ENCODE measurements at regions of chr20 and their contacts with region 1.

Region 1: DNA sequence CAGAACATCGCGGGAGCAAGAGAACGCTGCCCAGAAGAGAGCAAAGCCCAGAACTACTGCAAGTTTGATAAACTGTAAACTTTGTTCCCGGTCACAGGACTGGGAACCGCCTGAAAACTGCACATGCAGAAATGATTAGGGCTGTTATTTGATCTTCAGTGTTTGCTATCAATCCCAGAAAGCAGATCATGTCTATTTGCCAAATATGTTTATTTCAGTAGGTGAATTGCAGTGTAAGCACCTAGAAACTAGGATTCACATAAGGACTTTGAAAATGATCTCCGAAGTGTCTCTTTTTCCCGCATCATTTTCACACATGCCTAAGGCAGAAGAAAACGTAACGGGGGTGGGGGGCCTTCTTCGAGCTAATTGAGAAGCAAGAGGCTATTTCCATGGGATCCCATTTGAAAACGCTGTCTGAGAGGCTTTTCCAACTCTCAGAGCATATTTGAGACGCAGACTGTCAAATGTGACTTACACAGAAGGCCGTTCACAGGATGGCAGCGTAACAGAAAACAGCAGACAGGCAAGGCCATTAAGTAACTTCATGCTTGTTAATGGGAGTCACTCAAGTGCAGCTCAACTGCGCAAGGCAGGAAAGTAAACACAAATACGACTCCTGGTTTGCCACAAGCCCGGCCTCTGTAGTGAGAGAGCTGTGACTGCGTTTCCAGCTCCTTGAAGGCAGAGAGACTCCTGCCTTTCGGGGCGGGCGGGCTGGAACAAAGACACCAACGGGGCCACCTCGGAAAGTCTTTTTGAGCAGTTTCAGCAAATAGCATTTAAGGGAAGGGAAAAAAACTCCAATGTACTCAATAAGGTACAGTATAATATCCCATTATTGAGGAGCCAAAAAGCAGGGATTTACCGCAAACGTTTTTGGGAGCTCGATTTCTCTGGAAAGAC is 144.7 kb upstream of the ZNF217 start:
- DNase-seq: peak; percentile 90
- ATAC-seq: peak; percentile 82
- H3K4me3 ChIP-seq: peak overlapping the region; percentile 22; the same call in 1 of the 2 replicates
- H3K27ac ChIP-seq: peak overlapping the region; percentile 75
- H3K4me1 ChIP-seq: peaks cover 28% of the 10 kb centered on the region
- H3K27me3 ChIP-seq: no peaks in the 10 kb centered on the region
- CTCF ChIP-seq: no peak
- POLR2A ChIP-seq: peak; percentile 75
- RAD21 ChIP-seq: no peak

Region 2: GRCh38 chr20:53611449-53611894 is 126.8 kb before region 1 on chr20:
- CTCF ChIA-PET with region 1: interaction called, 5 read pairs
- POLR2A ChIA-PET with region 1: no interaction called
- dilution Hi-C with region 1: no loop called
- in situ Hi-C with region 1: no loop called
- intact Hi-C with region 1: loop called (anchors 5 kb)
- DNase-seq: peak; percentile 99
- ATAC-seq: peak; percentile 90
- H3K4me3 ChIP-seq: peak overlapping the region; percentile 4; the same call in 1 of the 2 replicates
- H3K27ac ChIP-seq: peak overlapping the region; percentile 81
- H3K4me1 ChIP-seq: peaks cover 18% of the 10 kb centered on the region
- H3K27me3 ChIP-seq: no peaks in the 10 kb centered on the region
- CTCF ChIP-seq: no peak
- POLR2A ChIP-seq: peak; percentile 80
- RAD21 ChIP-seq: peak; percentile 29; the same call in 1 of the 2 replicates

Region 3: GRCh38 chr20:53718142-53719021 is 19.9 kb before region 1 on chr20:
- CTCF ChIA-PET with region 1: no interaction called
- POLR2A ChIA-PET with region 1: no interaction called
- dilution Hi-C with region 1: no loop called
- in situ Hi-C with region 1: no loop called
- intact Hi-C with region 1: no loop called
- DNase-seq: no peak
- ATAC-seq: no peak
- H3K4me3 ChIP-seq: no peak overlapping the region
- H3K27ac ChIP-seq: no peak overlapping the region
- H3K4me1 ChIP-seq: no peaks in the 10 kb centered on the region; the same call in 1 of the 2 replicates
- H3K27me3 ChIP-seq: no peaks in the 10 kb centered on the region
- CTCF ChIP-seq: no peak
- POLR2A ChIP-seq: no peak
- RAD21 ChIP-seq: no peak

Region 4: GRCh38 chr20:53750827-53751619 is 12.7 kb after region 1 on chr20:
- CTCF ChIA-PET with region 1: interaction called, 3 read pairs
- POLR2A ChIA-PET with region 1: no interaction called
- dilution Hi-C with region 1: no loop called
- in situ Hi-C with region 1: no loop called
- intact Hi-C with region 1: loop called (anchors 1 kb)
- DNase-seq: peak; percentile 91
- ATAC-seq: peak; percentile 71
- H3K4me3 ChIP-seq: no peak overlapping the region
- H3K27ac ChIP-seq: peak overlapping the region; percentile 69
- H3K4me1 ChIP-seq: peaks cover 22% of the 10 kb centered on the region
- H3K27me3 ChIP-seq: no peaks in the 10 kb centered on the region
- CTCF ChIP-seq: no peak
- POLR2A ChIP-seq: peak; percentile 49
- RAD21 ChIP-seq: no peak; the same call in 1 of the 2 replicates

Region 5: DNA sequence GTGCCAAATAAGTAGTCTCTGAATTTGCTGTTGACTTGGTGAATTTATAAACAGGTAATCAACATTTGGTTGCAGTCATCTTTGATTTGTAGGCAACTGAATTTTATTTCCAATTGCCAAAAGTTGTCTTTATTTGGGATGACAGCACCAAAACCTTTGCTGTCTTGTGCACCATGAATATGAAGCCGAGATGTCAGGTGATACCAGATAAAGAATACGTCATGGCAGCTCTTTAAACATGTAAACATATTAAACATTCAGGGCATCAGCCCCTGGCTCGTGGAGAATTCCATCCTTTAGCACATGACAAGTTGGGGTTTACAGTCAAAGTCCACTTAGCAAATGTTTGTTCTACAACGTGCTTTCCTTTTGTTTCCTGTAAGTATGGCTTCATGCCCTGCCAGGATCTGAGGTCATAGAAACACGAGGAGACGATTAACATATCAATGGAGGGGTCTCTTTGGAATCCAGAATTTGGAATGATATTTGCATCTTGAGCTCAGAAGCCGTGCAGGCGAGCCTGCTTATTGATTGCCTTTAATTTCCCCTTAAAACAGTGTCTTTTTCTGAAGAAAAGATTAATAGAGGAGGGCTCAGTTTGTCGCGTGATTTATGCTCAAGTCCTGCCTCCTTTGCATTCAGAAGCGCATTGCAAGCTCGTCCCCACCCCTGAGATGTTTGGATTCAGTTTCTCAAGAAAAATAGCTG is 25.6 kb after region 1 on chr20:
- CTCF ChIA-PET with region 1: no interaction called
- POLR2A ChIA-PET with region 1: no interaction called
- dilution Hi-C with region 1: no loop called
- in situ Hi-C with region 1: no loop called
- intact Hi-C with region 1: loop called (anchors 1 kb)
- DNase-seq: peak; percentile 58
- ATAC-seq: peak; percentile 56
- H3K4me3 ChIP-seq: no peak overlapping the region
- H3K27ac ChIP-seq: peak overlapping the region; percentile 39; the same call in 1 of the 2 replicates
- H3K4me1 ChIP-seq: peaks cover 18% of the 10 kb centered on the region
- H3K27me3 ChIP-seq: no peaks in the 10 kb centered on the region
- CTCF ChIP-seq: no peak
- POLR2A ChIP-seq: no peak
- RAD21 ChIP-seq: no peak